CD4-positive, alpha-beta T cell (primary cell): ENCODE measurements at regions of chr7 and their contacts with region 1.

Region 1: DNA sequence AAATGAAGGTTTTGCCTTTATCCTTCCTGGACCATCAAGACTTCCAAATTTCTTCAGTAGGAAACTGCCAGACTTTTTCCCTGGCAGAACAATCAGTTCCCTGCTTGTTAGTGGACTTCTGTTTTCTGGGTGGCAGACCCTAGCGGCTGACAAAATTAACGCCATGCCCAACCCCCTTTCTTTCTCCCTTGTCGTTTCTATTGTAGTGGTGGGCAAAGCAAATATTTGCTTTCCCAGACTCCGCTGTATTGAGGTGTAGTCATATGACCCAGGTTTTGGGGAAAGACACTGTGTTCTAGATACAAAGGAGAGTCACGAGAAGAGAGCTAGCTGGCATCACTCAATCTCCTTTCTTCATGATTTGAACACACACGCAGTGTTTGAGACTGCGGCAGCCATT is 7.7 kb downstream of the PON2 start:
- DNase-seq: no peak
- ATAC-seq: no peak
- H3K4me3 ChIP-seq: no peak overlapping the region
- H3K4me3 Mint-ChIP-seq: no peak overlapping the region
- H3K27ac ChIP-seq: no peak overlapping the region
- H3K27ac Mint-ChIP-seq: no peak overlapping the region
- H3K4me1 ChIP-seq: no peaks in the 10 kb centered on the region
- H3K4me1 Mint-ChIP-seq: no peaks in the 10 kb centered on the region
- H3K27me3 ChIP-seq: no peaks in the 10 kb centered on the region
- H3K27me3 Mint-ChIP-seq: no peaks in the 10 kb centered on the region
- CTCF ChIP-seq: no peak

Region 2: GRCh38 chr7:93779115-93779514 is 1648.1 kb before region 1 on chr7:
- CTCF ChIA-PET with region 1: no interaction called
- POLR2A ChIA-PET with region 1: no interaction called
- intact Hi-C with region 1: no loop called
- DNase-seq: no peak
- ATAC-seq: no peak
- H3K4me3 ChIP-seq: no peak overlapping the region
- H3K4me3 Mint-ChIP-seq: no peak overlapping the region
- H3K27ac ChIP-seq: no peak overlapping the region
- H3K27ac Mint-ChIP-seq: no peak overlapping the region
- H3K4me1 ChIP-seq: no peaks in the 10 kb centered on the region
- H3K4me1 Mint-ChIP-seq: no peaks in the 10 kb centered on the region
- H3K27me3 ChIP-seq: no peaks in the 10 kb centered on the region
- H3K27me3 Mint-ChIP-seq: no peaks in the 10 kb centered on the region
- CTCF ChIP-seq: no peak

Region 3: GRCh38 chr7:95389516-95389915 is 37.6 kb before region 1 on chr7:
- CTCF ChIA-PET with region 1: no interaction called
- POLR2A ChIA-PET with region 1: no interaction called
- intact Hi-C with region 1: loop called in 1 of 2 experiments (anchors 5 kb)
- DNase-seq: no peak
- ATAC-seq: no peak
- H3K4me3 ChIP-seq: no peak overlapping the region
- H3K4me3 Mint-ChIP-seq: no peak overlapping the region
- H3K27ac ChIP-seq: no peak overlapping the region
- H3K27ac Mint-ChIP-seq: no peak overlapping the region
- H3K4me1 ChIP-seq: no peaks in the 10 kb centered on the region
- H3K4me1 Mint-ChIP-seq: no peaks in the 10 kb centered on the region
- H3K27me3 ChIP-seq: peaks cover 4 to 21% of the 10 kb centered on the region in 2 experiments
- H3K27me3 Mint-ChIP-seq: peaks cover 21% of the 10 kb centered on the region
- CTCF ChIP-seq: no peak